Endothelial cell of umbilical vein (primary cell): ENCODE measurements at regions of chr4 and their contacts with region 1.

Region 1: DNA sequence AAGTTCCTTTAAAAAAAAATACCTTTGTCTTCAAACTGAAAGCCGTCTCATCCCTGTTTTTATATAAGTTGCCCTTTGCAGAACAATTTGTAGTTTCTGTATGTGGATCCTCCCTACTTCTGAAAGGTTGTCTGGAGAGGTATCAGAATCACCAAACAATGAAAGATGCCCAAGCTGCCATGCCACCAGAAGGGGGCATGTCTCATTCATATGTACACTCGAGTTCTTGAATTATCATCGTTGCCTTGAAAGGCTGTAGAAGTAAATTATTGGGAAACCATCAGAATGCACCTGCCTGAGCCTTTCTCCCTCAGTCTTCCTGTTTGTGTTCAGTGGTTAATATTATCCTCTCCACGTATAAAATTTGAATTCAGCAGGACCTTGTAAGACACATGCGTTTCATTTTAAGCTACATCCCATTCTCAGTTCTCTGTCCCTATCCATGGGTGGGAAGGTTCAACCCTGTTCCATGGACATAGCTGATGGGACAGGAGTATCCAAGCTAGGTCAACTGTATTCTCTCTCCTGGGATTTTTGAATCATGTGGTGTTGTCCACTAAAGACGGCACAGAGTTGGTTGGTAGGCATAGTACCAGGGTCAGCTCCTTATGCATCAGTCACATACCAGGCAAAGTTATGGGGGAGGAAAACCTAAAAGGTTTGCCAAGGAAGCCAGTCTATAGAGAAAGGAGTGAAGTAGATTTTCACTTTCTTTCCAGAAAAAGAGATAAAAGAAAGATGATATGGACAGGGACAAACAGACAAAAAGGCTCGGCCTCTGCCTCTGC is 24.0 kb downstream of the GALNT7 start:
- DNase-seq: peak; percentile 38
- H3K4me3 ChIP-seq: no peak overlapping the region
- H3K27ac ChIP-seq: no peak overlapping the region
- H3K4me1 ChIP-seq: peaks cover 19% of the 10 kb centered on the region
- H3K27me3 ChIP-seq: no peaks in the 10 kb centered on the region
- CTCF ChIP-seq: peak in 1 of 2 donors; percentile 26
- POLR2A ChIP-seq: no peak

Region 2: GRCh38 chr4:173181769-173182354 is 10.7 kb before region 1 on chr4:
- CTCF ChIA-PET with region 1: no interaction called
- POLR2A ChIA-PET with region 1: no interaction called
- dilution Hi-C with region 1: no loop called
- intact Hi-C with region 1: loop called (anchors 1 kb)
- DNase-seq: peak; percentile 88
- H3K4me3 ChIP-seq: no peak overlapping the region
- H3K27ac ChIP-seq: peak overlapping the region; percentile 74
- H3K4me1 ChIP-seq: peaks cover 46% of the 10 kb centered on the region
- H3K27me3 ChIP-seq: no peaks in the 10 kb centered on the region
- CTCF ChIP-seq: no peak
- POLR2A ChIP-seq: no peak

Region 3: DNA sequence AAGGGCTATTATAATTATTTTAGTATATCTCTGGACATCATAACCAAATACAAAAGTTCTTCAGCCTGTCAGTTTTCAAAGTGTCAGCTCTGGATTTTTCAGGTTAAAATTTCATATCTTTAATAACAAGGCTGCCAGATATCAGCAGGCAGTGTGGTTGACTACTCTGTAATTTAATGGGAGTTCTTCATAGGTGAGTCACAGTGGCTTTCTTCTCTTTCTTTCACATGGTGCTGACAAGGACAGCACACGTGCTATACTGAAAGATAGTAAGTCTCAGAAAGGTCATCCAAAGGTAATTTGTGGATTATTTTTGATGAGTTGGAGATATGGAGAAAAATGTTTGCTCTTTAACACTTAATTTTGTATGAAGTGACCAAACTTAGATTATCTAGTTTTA is 19.3 kb after region 1 on chr4:
- CTCF ChIA-PET with region 1: interaction called, 3 read pairs
- POLR2A ChIA-PET with region 1: no interaction called
- dilution Hi-C with region 1: no loop called
- intact Hi-C with region 1: loop called (anchors 2 kb)
- DNase-seq: peak; percentile 53
- H3K4me3 ChIP-seq: no peak overlapping the region
- H3K27ac ChIP-seq: no peak overlapping the region
- H3K4me1 ChIP-seq: peaks cover 24% of the 10 kb centered on the region
- H3K27me3 ChIP-seq: no peaks in the 10 kb centered on the region
- CTCF ChIP-seq: no peak
- POLR2A ChIP-seq: no peak

Region 4: DNA sequence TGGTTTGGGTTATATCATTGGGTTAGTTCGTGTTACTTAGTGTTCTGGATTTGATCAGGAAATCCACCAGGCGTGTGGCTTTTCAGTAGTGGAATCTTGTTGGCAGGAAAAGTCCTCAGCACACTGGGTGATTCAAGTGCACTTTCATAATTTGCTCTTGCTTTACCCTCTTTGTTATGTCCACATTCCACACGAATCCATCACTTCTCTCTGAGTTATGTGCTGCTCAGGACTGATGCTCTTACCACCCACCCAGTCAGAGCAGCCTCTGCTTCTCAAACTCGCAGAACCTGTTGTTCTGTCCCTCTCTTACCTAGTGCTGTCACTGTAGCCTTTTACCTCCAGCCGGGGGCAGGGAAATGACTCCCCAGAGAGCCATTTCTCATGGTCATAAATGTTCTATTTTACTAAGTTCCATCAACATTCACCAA is 243.6 kb after region 1 on chr4:
- CTCF ChIA-PET with region 1: no interaction called
- POLR2A ChIA-PET with region 1: no interaction called
- dilution Hi-C with region 1: no loop called
- intact Hi-C with region 1: no loop called
- DNase-seq: no peak
- H3K4me3 ChIP-seq: no peak overlapping the region
- H3K27ac ChIP-seq: no peak overlapping the region
- H3K4me1 ChIP-seq: no peaks in the 10 kb centered on the region
- H3K27me3 ChIP-seq: peaks cover 1 to 4% of the 10 kb centered on the region in 2 experiments
- CTCF ChIP-seq: no peak
- POLR2A ChIP-seq: no peak